Right ventricle myocardium inferior (tissue), 1 donor: ENCODE measurements at regions of chr3 and their contacts with region 1.

Region 1: DNA sequence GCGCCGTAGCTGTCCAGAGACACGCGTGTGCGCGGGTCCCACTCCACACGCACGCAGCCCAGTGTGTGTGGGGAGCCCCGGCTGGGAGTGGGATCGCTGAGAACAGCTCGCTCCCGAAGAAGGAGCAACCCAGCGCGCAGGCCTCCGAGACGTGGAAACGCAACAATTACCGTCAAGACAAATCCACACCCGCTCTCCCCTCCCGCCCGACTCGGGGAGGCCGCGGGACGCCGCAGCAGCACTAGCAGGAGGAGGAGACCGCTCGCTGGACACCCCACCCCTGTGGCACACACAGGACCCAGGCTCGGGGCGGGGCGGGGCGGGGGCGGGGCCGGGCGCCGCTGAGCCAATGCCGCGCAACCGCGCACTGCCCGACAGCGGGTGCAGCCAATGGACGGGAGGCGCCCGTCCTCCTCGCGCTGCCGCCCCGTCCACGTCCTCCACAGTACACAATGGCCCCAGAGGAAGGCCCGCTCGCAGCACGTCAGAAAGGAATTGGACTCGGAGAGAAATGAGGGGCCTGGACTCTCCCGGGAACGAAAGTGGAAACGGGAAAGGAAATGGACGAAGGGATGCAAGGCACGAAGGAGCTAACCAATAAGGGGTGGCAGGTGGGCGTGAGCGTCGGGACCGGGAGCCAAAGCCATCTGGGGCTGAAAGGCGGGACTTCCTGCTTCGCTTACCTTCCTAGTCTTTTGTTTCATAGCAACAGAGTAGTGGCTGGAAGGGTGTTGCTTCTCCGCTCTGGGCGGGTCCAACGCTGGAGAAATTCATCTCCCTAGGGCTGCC is at the start of gene CBLB:
- DNase-seq: peak; percentile 97
- ATAC-seq: peak; percentile 95
- total RNA-seq, gene CBLB: 54.6 TPM

Region 2: DNA sequence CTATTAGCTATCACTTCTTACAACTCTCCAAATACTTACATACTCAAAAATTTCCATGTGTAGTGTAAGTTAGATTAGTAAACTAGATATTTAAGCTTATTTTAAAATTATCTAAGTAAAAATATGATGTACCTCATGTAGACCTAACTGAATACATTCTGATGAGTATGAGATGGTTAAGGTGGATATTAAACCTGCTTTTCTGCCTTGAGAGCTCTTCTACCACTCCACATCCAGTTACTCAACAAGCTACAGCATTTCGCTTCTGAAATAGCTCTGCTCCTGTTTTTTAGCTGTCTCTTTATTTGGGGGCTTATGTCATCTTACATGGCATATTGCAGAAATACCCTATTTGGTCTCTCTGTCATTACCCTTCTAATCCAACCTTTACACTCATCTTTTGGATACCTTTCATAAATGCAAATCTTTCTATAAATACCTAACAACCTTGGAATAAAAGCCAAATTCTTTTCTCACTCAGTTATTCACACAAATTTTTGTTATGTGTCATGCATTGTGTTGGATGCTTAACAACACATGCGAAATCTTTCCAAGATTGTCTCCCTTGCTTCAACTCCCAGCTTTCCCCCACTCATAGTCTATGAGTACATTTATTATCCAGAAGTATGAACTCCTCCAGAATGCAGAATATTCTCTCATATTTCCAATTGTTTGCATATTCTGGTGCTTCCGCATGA is 410.3 kb before region 1 on chr3:
- intact Hi-C with region 1: no loop called
- DNase-seq: no peak
- ATAC-seq: no peak

Region 3: DNA sequence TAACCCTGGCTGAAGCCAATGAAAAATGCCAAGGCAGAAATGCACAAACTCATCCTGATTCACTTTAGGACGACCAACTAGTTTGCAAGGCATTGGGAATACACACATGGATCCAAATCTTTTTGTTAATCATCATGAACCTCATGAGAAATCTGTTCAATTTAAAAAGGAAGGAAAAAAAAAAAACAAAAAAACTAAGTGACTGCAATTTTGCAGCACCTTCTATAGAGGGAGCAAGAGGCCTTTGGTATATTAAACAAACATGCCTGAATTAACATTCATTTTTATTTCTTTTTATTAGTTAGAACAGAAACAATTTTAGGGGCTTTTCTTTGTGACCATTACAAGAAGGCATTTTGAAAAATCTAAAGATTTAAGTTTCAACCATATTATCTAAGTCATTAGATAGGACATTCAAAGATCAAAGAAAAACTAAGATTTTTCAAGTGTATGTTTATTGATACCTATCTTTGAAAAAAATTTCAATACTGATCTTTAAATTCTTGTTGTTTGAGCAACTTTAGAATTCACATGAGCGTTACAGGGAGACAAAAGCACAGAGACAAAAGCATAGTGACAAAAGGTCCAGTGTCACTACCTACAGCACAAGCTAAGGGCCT is 182.5 kb before region 1 on chr3:
- intact Hi-C with region 1: loop called (anchors 5 kb)
- DNase-seq: no peak
- ATAC-seq: no peak

Region 4: GRCh38 chr3:105791919-105792786 is 76.8 kb before region 1 on chr3:
- intact Hi-C with region 1: loop called (anchors 1 kb)
- DNase-seq: peak; percentile 90
- ATAC-seq: peak; percentile 94

Region 5: DNA sequence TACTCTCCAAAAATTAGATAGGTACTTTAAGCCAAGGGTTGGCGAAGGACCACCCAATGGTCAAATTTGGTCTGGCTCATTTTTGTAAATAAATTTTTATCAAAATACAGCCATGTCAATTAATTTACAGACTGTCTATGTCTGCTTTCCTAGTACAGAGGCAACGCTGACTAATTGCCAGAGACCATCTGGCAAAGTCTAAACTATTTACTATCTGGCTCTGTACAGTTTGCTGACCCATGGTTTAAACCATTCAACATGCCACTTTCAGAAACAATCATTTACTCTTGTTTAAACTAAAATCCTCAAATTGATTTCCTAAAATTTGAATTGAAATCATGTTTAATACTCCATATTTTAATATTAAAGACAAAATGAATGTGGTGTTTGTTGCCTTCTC is 26.0 kb before region 1 on chr3:
- intact Hi-C with region 1: no loop called
- DNase-seq: no peak
- ATAC-seq: no peak

Region 6: GRCh38 chr3:105885256-105885655 is 16.3 kb after region 1 on chr3:
- intact Hi-C with region 1: no loop called
- DNase-seq: no peak
- ATAC-seq: no peak

Region 7: GRCh38 chr3:105906836-105907235 is 37.9 kb after region 1 on chr3:
- intact Hi-C with region 1: loop called (anchors 2 kb)
- DNase-seq: no peak
- ATAC-seq: peak; percentile 87

Region 8: DNA sequence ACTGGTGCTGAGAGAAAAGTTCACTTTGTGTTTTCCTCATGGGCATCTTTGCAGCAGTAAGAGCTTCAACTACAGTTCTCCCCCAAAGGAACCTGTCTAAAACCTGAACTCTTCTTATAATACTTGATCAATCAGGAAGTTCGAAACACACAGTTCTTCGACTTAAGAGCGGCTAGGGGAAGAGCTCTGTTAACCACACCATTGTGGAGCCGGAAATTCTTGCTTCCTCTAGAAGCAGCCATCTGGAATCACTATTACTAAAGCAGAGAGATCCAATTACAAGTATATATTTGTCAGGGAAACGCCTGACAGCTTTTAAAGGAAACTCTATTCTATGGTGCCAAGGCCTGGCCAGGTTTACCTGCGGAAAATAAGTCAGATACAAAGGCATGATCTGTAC is 337.2 kb after region 1 on chr3:
- intact Hi-C with region 1: loop called (anchors 5 kb)
- DNase-seq: no peak
- ATAC-seq: peak; percentile 39